ENCODE measurements at regions of chr15 and their contacts with region 1.

Region 1: DNA sequence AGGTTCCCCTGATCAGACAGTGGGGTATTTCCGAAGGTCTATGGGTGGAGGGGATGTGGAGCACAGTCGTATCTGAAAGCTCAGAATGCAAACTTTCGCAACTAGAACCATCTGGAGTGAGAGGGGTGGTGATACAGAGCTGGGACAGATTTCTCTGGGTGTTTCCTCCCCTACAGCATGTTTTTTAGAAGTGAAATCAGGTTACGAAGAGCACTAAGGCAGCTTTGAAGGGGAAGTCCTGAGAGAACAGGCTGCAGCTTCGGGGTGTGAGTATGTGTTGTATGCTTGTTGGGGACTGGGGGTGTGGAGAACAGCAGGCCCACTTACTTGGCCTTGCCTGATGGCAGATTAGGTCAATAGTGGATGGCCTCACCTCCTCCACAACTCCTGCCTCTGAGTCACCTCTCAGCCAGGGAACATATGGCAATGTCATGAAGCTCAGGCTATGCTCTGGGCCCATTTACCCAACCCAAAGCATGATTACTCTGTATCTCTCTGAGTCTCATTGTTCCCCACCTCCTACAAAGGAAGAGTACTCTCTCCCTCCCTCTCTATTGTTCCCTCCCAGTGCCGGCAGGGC is 107.2 kb upstream of the RASGRP1 start:
- DNase-seq: peak; percentile 88
- H3K4me3 Mint-ChIP-seq: peak overlapping the region; percentile 68
- H3K27ac Mint-ChIP-seq: peak overlapping the region; percentile 96
- H3K4me1 Mint-ChIP-seq: peaks cover 70% of the 10 kb centered on the region
- H3K27me3 Mint-ChIP-seq: no peaks in the 10 kb centered on the region

Region 2: DNA sequence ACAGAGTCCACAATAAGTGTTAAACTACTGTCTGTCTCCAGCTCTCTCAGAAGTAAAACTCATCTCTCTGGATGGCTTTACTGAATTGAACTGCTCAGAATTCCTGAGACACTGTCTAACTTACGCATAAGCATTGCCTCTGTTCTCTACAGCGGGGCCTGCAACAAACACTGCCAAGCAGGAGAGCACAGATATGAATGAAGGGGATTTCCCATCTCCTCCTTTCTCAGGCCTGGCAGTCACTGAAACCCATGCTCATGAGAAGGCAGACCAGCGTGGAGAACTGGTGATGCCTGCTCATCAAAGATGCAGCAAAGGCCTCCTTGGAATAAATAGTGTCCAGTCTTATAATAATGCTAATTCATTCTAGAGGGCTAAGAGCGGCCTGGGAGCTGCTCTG is 117.4 kb before region 1 on chr15:
- intact Hi-C with region 1: loop called (anchors 1 kb)
- DNase-seq: peak; percentile 75
- H3K4me3 Mint-ChIP-seq: peak overlapping the region; percentile 60
- H3K27ac Mint-ChIP-seq: peak overlapping the region; percentile 89
- H3K4me1 Mint-ChIP-seq: peaks cover 83% of the 10 kb centered on the region
- H3K27me3 Mint-ChIP-seq: no peaks in the 10 kb centered on the region

Region 3: GRCh38 chr15:38631126-38632075 is 40.4 kb before region 1 on chr15:
- intact Hi-C with region 1: loop called (anchors 2 kb)
- DNase-seq: no peak
- H3K4me3 Mint-ChIP-seq: peak overlapping the region; percentile 53
- H3K27ac Mint-ChIP-seq: peak overlapping the region; percentile 77
- H3K4me1 Mint-ChIP-seq: peaks cover 47% of the 10 kb centered on the region
- H3K27me3 Mint-ChIP-seq: no peaks in the 10 kb centered on the region

Region 4: DNA sequence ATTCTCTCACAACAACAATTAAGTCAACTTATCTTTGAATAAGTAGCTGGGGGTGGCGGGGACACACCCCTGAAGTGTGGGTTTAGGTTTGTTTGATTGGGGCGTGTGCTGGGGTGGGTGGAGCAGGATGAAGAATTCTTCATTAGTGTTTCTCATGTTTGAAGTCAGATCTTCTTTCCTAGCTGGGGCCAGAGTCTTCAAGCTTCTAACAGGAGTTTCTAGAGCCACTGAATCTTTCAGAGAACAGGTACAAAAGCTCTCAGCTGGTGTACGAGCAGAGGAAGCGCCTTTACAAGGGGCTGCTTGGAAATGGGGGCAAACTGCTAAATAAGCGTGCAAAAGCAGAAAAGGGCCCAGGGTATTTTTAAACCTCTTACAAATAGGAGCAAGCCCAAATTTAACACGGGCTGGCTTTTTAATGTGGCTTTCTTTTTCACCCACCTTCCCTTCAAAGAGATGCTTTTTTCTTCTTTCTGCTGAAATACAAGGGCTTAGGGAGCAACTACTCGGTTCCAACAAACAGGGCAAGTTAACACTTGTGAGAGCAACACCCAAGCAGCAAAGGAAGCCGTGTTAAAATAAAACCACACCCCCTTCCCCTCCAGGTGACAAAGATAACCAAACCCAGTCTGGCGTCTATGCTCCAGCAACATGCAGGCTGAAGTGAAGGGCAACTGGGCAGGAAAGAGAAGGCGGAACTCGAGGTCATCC is 20.3 kb before region 1 on chr15:
- intact Hi-C with region 1: loop called (anchors 1 kb)
- DNase-seq: peak; percentile 89
- H3K4me3 Mint-ChIP-seq: peak overlapping the region; percentile 82
- H3K27ac Mint-ChIP-seq: peak overlapping the region; percentile 90
- H3K4me1 Mint-ChIP-seq: peaks cover 76% of the 10 kb centered on the region
- H3K27me3 Mint-ChIP-seq: no peaks in the 10 kb centered on the region

Region 5: GRCh38 chr15:38660738-38661137 is 11.0 kb before region 1 on chr15:
- intact Hi-C with region 1: loop called (anchors 1 kb)
- DNase-seq: peak; percentile 74
- H3K4me3 Mint-ChIP-seq: peak overlapping the region; percentile 73
- H3K27ac Mint-ChIP-seq: peak overlapping the region; percentile 85
- H3K4me1 Mint-ChIP-seq: peaks cover 63% of the 10 kb centered on the region
- H3K27me3 Mint-ChIP-seq: no peaks in the 10 kb centered on the region

Region 6: GRCh38 chr15:38683382-38684242 is 11.8 kb after region 1 on chr15:
- intact Hi-C with region 1: loop called (anchors 1 kb)
- DNase-seq: peak; percentile 91
- H3K4me3 Mint-ChIP-seq: peak overlapping the region; percentile 55
- H3K27ac Mint-ChIP-seq: peak overlapping the region; percentile 97
- H3K4me1 Mint-ChIP-seq: peaks cover 73% of the 10 kb centered on the region
- H3K27me3 Mint-ChIP-seq: no peaks in the 10 kb centered on the region

Region 7: GRCh38 chr15:38690689-38691332 is 19.0 kb after region 1 on chr15:
- intact Hi-C with region 1: loop called (anchors 2 kb)
- DNase-seq: peak; percentile 94
- H3K4me3 Mint-ChIP-seq: no peak overlapping the region
- H3K27ac Mint-ChIP-seq: peak overlapping the region; percentile 54
- H3K4me1 Mint-ChIP-seq: peaks cover 75% of the 10 kb centered on the region
- H3K27me3 Mint-ChIP-seq: no peaks in the 10 kb centered on the region